Activated naive CD4-positive, alpha-beta T cell treated with anti-CD3 and anti-CD28 coated beads for 36 hours (primary cell): ENCODE measurements at regions of chr3 and their contacts with region 1.

Region 1: DNA sequence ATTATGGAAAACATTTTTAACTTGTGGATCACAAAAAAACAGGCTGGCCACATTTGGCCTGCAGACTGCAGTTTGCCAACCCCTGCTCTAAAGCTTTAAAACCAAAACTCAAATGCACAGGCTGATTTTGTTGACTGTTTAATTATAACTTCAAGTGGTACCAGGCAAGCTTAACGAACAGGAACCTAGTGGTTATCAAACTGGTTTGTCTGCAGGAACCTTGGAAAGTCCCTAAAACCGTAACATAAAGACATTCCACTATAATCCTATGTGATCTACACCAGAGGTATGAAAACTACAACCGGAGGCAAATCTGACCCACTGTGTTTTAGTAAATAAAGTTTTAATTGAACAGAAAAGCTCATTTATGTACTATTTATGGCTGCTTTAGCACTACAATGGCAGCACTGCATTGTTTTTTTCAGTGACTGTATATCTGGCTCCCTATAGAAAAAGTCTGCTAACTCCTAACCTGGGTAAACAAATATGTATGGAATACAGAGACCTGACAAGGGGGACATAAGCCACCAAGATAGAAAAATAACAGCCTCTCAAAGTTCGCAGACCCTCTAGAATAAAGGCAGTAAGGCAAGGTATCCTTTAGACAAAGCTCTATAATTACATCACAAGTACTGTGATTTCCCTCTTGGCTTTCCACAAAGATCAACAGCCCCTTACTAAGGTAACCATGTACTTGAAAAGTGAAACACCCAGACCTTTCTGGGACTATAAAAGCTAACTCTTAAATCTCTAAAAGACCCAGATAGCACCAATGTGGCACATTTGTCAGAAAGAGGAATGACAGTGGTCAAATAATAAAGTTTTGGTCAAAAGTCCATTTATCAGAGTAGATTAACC is 52.1 kb downstream of the TBL1XR1 start:
- DNase-seq: no peak
- H3K4me3 Mint-ChIP-seq: no peak overlapping the region
- H3K27ac Mint-ChIP-seq: peak overlapping the region; percentile 56
- H3K4me1 Mint-ChIP-seq: peaks cover 67% of the 10 kb centered on the region
- H3K27me3 Mint-ChIP-seq: no peaks in the 10 kb centered on the region

Region 2: GRCh38 chr3:177109688-177110330 is 35.3 kb before region 1 on chr3:
- CTCF ChIA-PET with region 1: interaction called, 3 read pairs
- intact Hi-C with region 1: loop called (anchors 5 kb)
- DNase-seq: no peak
- H3K4me3 Mint-ChIP-seq: no peak overlapping the region
- H3K27ac Mint-ChIP-seq: peak overlapping the region; percentile 46
- H3K4me1 Mint-ChIP-seq: peaks cover 66% of the 10 kb centered on the region
- H3K27me3 Mint-ChIP-seq: no peaks in the 10 kb centered on the region